HEK293T (cell line): ENCODE measurements at regions of chr1 and their contacts with region 1.

Region 1: DNA sequence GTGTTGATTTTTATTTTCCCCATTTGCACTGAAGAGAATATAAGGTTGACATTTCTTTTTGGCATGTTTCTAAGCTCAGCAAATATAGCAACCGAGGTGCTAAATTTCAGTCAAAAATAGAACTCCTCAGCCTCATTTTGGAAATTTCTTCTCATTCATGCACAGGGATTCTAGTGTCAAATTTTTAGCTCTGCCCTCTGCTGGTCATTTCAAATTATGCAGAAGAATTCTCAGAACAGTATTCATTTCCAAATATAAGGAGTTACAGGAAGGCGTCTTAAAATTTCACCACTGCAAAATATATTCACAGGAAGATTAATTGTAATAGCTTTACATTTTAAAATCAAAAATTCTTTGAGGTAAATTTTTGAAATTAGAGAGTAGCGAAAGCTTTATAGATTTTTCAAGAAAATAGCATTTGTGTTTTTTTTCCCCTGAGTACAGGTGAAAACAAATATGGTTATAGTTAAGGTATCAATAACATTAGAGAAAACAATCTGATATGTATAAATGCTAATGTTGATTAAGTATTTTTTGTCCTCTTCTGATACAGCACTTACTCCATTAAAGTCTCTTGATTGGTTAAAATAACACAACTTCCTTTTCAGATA is 57.9 kb downstream of the FMN2 start:
- DNase-seq: peak; percentile 31

Region 2: GRCh38 chr1:240027059-240027462 is 122.5 kb before region 1 on chr1:
- CTCF ChIA-PET with region 1: interaction called, 16 read pairs
- POLR2A ChIA-PET with region 1: no interaction called
- DNase-seq: peak; percentile 77

Region 3: GRCh38 chr1:240092301-240093119 is 57.1 kb before region 1 on chr1:
- CTCF ChIA-PET with region 1: interaction called, 13 read pairs
- POLR2A ChIA-PET with region 1: interaction called, 3 read pairs
- DNase-seq: peak; percentile 53

Region 4: DNA sequence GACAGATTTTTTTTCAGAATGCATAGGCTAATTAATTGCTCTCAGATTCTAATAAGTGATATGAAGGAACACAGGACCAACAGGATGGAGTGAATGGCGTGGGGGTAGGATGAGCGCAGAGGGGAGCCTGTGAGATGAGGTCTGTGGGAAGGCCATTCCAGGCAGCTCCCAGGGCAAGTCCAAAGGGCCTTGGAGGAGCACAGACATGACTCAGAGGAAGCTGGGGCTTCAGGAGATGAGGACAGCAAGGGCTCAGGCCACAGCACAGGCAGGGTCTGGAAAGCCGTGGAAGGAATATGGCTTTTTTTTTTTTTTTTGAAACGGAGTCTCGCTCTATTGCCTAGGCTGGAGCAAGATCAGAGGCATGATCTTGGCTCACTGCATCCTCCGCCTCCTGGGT is 22.8 kb before region 1 on chr1:
- CTCF ChIA-PET with region 1: interaction called, 10 read pairs
- POLR2A ChIA-PET with region 1: no interaction called
- DNase-seq: no peak